ENCODE measurements at regions of chr10 and their contacts with region 1.

Region 1: DNA sequence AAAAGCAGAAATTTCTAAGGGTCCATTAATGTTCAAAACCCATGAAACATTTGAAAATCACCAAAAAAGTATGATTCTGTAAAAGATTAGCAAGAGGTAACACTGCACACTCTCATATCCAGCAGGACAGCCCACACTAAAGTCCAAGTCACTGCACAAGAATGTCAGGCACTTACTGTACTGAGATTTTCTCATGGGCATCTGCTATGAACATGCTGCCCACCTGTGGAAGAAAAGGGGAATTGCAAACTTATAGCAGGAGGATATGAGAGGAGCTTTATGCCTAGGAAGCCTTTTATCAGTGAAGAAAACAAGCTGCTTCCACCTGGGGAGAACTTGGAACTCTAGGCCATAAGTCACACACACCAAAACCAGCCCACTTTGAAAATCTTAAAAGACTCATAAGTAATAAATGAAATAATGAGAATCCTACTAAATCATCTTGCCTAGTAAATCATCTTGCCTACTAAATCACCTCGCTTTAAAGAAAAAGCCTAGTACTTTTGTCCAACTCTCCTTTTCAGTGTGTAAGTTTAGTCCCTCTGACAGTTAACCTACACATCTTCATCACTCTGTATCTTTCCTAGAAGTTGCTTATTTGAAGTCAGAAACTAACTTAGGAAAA is 46.1 kb downstream of the ARMH3 start:
- DNase-seq: peak; percentile 87
- H3K4me3 ChIP-seq: no peak overlapping the region
- H3K27ac ChIP-seq: no peak overlapping the region
- H3K27me3 ChIP-seq: no peaks in the 10 kb centered on the region
- CTCF ChIP-seq: peak; percentile 100

Region 2: DNA sequence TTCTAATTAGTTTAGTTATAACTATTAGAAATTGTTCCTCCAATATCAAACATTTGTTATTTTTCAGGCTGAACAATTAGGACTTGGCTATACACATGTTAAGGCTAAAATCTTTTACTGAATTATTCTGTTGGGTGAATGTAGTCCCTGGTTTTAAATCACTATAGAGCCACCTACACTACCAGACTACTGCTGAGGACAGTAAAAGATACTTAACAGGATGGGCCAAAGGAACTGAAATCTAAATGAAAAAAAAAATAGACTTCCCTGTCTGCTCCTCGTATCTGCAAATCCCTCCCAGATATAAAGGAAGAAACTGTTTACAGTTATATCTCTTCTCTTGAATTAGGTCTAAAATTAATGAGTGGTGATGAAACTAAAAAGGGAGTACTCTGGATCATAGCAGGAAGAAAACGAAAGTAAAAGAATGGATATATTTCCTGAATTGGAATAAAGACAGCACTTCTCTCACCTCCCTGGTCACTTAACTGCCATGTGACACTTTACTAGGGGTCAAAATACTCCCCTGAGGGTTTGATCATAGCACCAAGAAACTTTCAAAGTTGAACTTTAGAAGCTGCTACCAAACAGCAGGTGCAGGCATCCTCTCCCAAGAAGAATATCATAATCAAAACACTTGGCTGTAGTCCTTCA is 327.6 kb before region 1 on chr10:
- CTCF ChIA-PET with region 1: no interaction called
- POLR2A ChIA-PET with region 1: no interaction called
- DNase-seq: no peak
- H3K4me3 ChIP-seq: peak overlapping the region; percentile 18
- H3K27ac ChIP-seq: no peak overlapping the region
- H3K27me3 ChIP-seq: no peaks in the 10 kb centered on the region
- CTCF ChIP-seq: no peak

Region 3: DNA sequence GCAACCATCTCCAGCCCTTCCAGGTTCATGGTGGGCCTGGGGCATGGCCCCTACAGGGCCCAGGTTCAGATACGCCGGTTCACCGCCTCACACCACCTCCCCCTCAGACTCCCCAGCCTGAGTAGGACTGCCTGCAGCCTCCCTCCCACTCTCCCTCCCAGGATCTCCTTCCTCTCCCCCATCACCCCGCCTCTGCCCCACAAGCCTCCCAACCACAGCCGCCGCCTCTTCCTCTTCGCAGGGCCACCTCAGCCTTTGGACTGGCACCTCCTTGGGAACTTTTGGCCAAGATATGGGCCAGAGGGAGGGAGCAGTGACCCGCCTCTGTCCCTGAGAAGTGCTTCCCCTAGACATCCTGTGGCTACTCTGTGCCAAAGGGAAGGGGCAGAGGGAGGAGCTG is 175.6 kb before region 1 on chr10:
- CTCF ChIA-PET with region 1: interaction called, 256 read pairs
- POLR2A ChIA-PET with region 1: interaction called, 3 read pairs
- DNase-seq: no peak
- H3K4me3 ChIP-seq: no peak overlapping the region
- H3K27ac ChIP-seq: no peak overlapping the region
- H3K27me3 ChIP-seq: no peaks in the 10 kb centered on the region
- CTCF ChIP-seq: no peak

Region 4: DNA sequence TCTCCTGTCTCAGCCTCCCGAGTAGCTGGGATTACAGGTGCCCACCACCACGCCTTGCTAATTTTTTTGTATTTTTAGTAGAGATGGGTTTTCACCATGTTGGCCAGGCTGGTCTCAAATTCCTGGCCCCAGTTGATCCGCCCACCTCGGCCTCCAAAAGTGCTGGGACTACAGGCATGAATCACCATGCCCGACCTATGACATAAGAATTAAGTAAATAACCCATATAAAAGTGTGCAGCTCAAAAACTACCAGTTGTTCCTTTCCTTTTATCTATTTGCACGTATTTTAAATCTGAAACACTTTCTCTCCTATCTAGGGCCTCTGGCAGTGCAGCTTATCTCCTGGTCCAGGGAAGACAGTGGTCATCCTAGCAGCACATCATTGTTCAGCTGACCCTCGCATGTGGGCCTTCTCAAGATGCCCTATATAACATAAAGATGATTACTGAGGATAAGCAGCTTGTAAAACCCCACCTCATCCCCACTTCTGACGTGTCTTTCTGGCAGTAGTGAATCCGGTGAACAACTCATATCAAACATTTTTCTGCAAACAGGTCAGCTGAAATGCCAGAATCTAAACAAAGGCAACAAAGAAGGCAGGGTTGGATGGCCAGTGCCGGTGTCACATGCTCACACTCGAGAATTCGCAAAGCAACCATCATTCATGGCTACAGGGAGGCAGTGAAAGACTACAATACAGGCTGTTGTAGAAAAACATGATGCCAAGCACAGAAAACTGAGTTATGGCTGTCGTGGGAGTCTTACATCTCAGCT is 130.3 kb before region 1 on chr10:
- CTCF ChIA-PET with region 1: interaction called, 244 read pairs
- POLR2A ChIA-PET with region 1: no interaction called
- DNase-seq: peak; percentile 81
- H3K4me3 ChIP-seq: no peak overlapping the region
- H3K27ac ChIP-seq: peak overlapping the region; percentile 92
- H3K27me3 ChIP-seq: no peaks in the 10 kb centered on the region
- CTCF ChIP-seq: no peak

Region 5: DNA sequence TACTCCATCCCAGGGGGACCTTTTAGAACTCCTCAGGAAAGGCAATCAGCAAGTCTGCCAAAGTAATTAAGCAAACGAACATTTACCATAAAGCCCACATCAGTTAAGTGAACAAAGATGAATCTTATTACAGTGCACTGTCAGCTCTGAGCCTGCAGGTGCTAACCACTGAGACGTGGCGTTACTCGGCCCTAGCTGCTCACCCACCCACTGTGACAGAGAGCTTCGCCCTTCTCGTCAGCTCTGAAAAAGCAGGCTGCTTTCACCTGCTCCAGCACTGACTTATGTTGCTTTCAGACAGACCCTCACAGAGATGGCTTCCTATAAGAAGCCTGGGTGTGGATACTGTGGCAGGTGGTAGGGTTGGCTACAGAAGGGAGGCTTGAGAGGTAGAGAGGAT is 108.6 kb before region 1 on chr10:
- CTCF ChIA-PET with region 1: interaction called, 26 read pairs
- POLR2A ChIA-PET with region 1: no interaction called
- DNase-seq: no peak
- H3K4me3 ChIP-seq: no peak overlapping the region
- H3K27ac ChIP-seq: no peak overlapping the region
- H3K27me3 ChIP-seq: no peaks in the 10 kb centered on the region
- CTCF ChIP-seq: no peak

Region 6: DNA sequence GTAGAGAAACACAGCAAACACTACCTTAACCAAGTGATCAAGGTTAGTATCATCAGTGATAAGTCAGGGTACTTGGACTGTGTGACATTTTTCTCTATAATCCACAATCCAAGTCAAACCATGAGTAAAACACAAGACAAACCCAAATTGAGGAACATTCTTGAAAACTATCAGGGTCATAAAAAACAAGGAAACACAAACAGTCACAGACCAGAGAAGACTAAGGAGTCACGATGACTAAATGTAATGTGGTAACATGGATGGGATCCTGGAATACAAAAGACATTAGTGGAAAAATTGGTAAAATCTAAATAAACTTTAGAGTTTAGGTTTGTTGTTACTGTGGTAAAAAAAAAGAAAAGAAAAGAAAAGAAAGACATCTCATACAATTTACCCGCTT is 57.7 kb before region 1 on chr10:
- CTCF ChIA-PET with region 1: no interaction called
- POLR2A ChIA-PET with region 1: interaction called, 10 read pairs
- DNase-seq: no peak
- H3K4me3 ChIP-seq: no peak overlapping the region
- H3K27ac ChIP-seq: no peak overlapping the region
- H3K27me3 ChIP-seq: no peaks in the 10 kb centered on the region
- CTCF ChIP-seq: no peak

Region 7: GRCh38 chr10:102024799-102025198 is 14.9 kb after region 1 on chr10:
- CTCF ChIA-PET with region 1: interaction called, 15 read pairs
- POLR2A ChIA-PET with region 1: no interaction called
- DNase-seq: no peak
- H3K4me3 ChIP-seq: no peak overlapping the region
- H3K27ac ChIP-seq: no peak overlapping the region
- H3K27me3 ChIP-seq: no peaks in the 10 kb centered on the region
- CTCF ChIP-seq: no peak

Region 8: GRCh38 chr10:102302611-102303010 is 292.7 kb after region 1 on chr10:
- CTCF ChIA-PET with region 1: no interaction called
- POLR2A ChIA-PET with region 1: no interaction called
- DNase-seq: no peak
- H3K4me3 ChIP-seq: no peak overlapping the region
- H3K27ac ChIP-seq: no peak overlapping the region
- H3K27me3 ChIP-seq: no peaks in the 10 kb centered on the region
- CTCF ChIP-seq: no peak